ENCODE measurements at regions of chr12 and their contacts with region 1.

Region 1: DNA sequence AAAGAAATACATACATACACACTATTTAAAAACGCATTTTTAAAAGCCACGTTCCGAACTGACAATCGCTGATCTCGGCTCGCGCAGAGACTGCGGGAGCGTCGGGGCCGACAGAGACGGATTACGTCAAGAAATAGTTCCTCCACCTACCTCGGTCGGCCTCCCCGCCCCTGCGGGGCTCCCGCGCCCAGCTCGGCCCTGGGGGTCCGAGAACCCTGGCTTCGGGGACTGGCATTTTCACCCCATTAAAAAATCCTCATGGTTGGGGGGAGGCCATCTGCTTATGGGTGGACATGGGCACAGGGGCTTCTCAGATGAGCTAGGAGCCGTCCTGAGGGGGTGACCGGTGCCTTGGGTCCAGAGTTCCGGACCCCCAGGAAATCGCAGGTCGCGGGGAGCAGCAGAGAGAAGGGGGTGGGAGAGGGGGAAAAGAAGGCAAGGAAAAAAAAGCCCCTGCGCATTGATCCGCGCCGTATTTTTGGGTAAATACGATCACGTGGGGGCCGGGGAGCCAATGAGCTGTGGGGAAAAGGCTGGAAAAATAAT is 329 bp upstream of the HOXC9 start:
- DNase-seq: peak in 2 of 5 donors; percentile 87 to 95
- H3K4me3 ChIP-seq: peak overlapping the region; percentile 75 to 88 (median 85)
- H3K27ac ChIP-seq: peak overlapping the region; percentile 83 to 97
- H3K4me1 ChIP-seq: peaks cover 3 to 18% (median 11%) of the 10 kb centered on the region in 3 donors
- H3K27me3 ChIP-seq: no peaks in the 10 kb centered on the region
- CTCF ChIP-seq: no peak

Region 2: DNA sequence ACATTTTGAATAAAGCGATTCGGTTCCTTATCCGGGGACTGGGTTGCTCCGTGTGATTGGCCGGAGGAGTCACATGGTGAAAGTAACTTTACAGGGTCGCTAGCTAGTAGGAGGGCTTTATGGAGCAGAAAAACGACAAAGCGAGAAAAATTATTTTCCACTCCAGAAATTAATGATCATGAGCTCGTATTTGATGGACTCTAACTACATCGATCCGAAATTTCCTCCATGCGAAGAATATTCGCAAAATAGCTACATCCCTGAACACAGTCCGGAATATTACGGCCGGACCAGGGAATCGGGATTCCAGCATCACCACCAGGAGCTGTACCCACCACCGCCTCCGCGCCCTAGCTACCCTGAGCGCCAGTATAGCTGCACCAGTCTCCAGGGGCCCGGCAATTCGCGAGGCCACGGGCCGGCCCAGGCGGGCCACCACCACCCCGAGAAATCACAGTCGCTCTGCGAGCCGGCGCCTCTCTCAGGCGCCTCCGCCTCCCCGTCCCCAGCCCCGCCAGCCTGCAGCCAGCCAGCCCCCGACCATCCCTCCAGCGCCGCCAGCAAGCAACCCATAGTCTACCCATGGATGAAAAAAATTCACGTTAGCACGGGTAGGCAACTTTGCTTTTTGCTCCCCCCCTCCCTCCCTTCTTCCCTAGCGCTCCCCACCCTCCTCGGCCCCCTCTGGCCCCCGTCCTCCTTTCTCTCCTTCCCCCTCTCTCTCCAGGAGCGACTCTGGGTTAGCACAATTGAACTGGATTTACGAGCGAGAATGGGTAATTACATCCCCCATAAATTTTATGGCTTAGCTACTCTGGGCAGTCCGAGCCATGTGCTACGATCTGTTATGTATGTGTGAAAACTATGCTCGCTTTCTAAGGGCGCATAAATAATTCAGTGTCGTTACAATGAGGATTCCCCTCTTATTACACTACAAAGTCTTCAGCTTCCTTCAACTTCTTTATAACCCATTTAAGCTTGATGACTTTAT is 54.4 kb after region 1 on chr12 and contains the start of gene HOXC4:
- intact Hi-C with region 1: no loop called
- DNase-seq: peak in 4 of 5 donors; percentile 92 to 98 (median 95)
- H3K4me3 ChIP-seq: peak within 1 kb of the TSS; percentile 34 to 62 (median 58)
- H3K27ac ChIP-seq: no peak within 1 kb of the TSS
- H3K4me1 ChIP-seq: peaks cover 0 to 14% (median 9%) of the 10 kb centered on the region in 3 donors
- H3K27me3 ChIP-seq: no peaks in the 10 kb centered on the region
- CTCF ChIP-seq: no peak
- total RNA-seq, gene HOXC4: 24.5 TPM

Region 3: DNA sequence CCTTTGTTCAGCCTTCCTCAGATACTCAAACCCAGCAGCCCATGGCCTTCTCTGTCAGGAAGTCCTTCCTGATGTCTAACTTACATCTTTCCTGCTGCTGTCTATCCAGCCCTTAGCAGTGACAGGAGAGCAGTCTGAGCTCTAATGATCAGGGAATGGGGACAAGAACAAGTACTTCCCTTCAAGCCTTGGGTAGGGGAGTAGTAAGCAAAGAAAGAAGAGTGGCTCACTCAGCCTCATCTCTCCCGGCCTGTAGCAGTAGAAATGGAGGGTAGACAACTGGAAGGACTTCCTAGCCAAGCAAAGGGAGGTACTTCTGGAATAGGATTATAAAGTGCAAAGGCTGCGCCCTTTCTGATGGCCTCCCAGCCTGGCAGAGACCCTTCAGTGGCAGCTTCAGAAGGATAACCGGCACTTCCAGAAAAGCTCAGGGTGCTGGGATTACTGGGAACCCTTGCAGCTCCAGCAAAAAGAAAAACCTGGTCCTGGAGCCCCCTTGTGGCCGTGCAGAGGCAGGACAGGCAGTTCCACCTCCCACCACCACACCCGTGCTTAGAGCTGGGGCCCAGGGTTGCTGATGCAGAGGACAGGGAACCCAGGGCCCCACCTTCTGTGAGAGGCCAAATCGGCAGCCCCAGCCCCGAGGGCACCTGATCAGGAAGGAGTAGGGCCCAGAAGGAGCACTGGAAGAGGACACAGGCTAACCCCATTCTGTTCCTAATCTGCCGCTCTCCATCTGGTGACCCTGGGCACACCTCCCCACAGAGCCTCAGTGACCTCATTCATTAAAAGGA is 201.6 kb after region 1 on chr12:
- intact Hi-C with region 1: loop called (anchors 5 kb)
- DNase-seq: peak; percentile 89 to 91 (median 89)
- H3K4me3 ChIP-seq: no peak overlapping the region
- H3K27ac ChIP-seq: no peak overlapping the region
- H3K4me1 ChIP-seq: peaks cover 4 to 15% (median 5%) of the 10 kb centered on the region in 3 donors
- H3K27me3 ChIP-seq: no peaks in the 10 kb centered on the region
- CTCF ChIP-seq: peak; percentile 97